ENCODE measurements at regions of chr2 and their contacts with region 1.

Region 1: DNA sequence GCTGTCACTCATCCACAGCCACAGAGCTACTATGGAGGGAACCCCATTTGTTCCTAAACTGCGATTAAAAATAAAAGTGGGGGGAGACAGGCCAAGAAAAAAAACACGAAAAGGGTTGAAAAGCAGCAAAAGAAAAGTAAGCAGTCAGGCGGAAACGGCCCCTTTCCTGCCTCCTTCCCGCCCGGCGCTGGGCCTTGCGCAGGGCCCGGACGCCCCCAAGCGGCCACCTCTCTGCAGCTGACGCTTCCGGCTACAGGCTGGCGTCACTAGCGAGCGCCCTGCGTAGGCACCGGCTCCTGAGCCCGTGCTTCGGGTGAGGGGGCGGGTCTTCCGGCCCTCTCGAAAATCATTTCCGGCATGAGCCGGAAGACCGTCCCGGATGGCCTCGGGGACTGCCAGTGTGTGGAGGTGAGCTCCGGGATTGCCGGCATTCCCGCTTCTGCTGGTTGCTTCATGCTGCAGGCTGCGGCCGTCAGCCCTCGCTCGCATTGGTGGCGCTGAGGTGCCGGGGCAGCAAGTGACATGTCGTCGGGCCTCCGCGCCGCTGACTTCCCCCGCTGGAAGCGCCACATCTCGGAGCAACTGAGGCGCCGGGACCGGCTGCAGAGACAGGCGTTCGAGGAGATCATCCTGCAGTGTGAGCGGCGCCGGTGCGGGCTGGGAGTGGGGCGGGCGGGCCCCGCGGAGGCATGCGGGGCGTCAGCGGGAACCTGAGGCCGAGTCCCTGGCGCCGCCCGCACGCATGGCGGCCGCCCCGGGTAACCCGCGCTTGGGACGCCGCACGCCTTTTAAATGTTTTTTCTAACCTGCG is at the start of gene ATG16L1:
- DNase-seq: peak; percentile 97
- ATAC-seq: peak; percentile 88
- H3K4me3 Mint-ChIP-seq: peak within 1 kb of the TSS; percentile 92
- H3K27ac Mint-ChIP-seq: peak within 1 kb of the TSS; percentile 100
- H3K4me1 Mint-ChIP-seq: peaks cover 63% of the 10 kb centered on the region
- H3K27me3 Mint-ChIP-seq: no peaks in the 10 kb centered on the region
- CTCF ChIP-seq: peak; percentile 83
- total RNA-seq, gene ATG16L1: 22.1 to 24.4 TPM

Region 2: GRCh38 chr2:233053928-233054784 is 197.4 kb before region 1 on chr2:
- CTCF ChIA-PET with region 1: interaction called, 18 read pairs
- POLR2A ChIA-PET with region 1: interaction called, 27 read pairs
- intact Hi-C with region 1: no loop called
- DNase-seq: peak; percentile 83
- ATAC-seq: peak; percentile 85
- H3K4me3 Mint-ChIP-seq: no peak overlapping the region
- H3K27ac Mint-ChIP-seq: no peak overlapping the region
- H3K4me1 Mint-ChIP-seq: peaks cover 7% of the 10 kb centered on the region
- H3K27me3 Mint-ChIP-seq: peaks cover 3% of the 10 kb centered on the region
- CTCF ChIP-seq: peak; percentile 96

Region 3: DNA sequence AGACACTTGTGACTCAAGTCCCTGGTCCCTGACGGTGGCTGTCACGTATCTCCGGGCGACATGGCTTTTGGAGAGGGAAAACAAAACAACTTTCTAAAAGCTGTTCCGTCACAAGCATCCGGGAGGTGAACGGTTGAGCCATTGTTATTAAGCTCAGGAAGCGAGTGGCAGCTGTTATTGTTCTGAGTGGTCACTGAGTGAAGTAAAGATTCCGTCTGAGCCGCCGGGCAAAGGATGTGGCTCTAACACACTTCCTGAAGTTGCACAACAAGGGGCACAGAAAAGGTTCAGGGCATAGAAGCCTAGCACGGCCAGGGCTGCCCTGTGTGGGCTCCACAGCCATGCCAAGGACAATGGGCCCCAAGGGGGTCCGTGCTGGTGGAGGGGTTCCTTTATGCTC is 167.0 kb before region 1 on chr2:
- CTCF ChIA-PET with region 1: interaction called, 4 read pairs
- POLR2A ChIA-PET with region 1: interaction called, 13 read pairs
- intact Hi-C with region 1: no loop called
- DNase-seq: peak; percentile 78
- ATAC-seq: peak; percentile 26
- H3K4me3 Mint-ChIP-seq: peak overlapping the region; percentile 54
- H3K27ac Mint-ChIP-seq: peak overlapping the region; percentile 85
- H3K4me1 Mint-ChIP-seq: peaks cover 80% of the 10 kb centered on the region
- H3K27me3 Mint-ChIP-seq: no peaks in the 10 kb centered on the region
- CTCF ChIP-seq: no peak

Region 4: GRCh38 chr2:233261819-233262555 is 10.5 kb after region 1 on chr2:
- CTCF ChIA-PET with region 1: interaction called, 30 read pairs
- POLR2A ChIA-PET with region 1: interaction called, 22 read pairs
- intact Hi-C with region 1: no loop called
- DNase-seq: no peak
- ATAC-seq: peak; percentile 49
- H3K4me3 Mint-ChIP-seq: no peak overlapping the region
- H3K27ac Mint-ChIP-seq: peak overlapping the region; percentile 55
- H3K4me1 Mint-ChIP-seq: peaks cover 52% of the 10 kb centered on the region
- H3K27me3 Mint-ChIP-seq: no peaks in the 10 kb centered on the region
- CTCF ChIP-seq: no peak